Astrocyte of the cerebellum (primary cell): ENCODE measurements at regions of chr2 and their contacts with region 1.

Region 1: DNA sequence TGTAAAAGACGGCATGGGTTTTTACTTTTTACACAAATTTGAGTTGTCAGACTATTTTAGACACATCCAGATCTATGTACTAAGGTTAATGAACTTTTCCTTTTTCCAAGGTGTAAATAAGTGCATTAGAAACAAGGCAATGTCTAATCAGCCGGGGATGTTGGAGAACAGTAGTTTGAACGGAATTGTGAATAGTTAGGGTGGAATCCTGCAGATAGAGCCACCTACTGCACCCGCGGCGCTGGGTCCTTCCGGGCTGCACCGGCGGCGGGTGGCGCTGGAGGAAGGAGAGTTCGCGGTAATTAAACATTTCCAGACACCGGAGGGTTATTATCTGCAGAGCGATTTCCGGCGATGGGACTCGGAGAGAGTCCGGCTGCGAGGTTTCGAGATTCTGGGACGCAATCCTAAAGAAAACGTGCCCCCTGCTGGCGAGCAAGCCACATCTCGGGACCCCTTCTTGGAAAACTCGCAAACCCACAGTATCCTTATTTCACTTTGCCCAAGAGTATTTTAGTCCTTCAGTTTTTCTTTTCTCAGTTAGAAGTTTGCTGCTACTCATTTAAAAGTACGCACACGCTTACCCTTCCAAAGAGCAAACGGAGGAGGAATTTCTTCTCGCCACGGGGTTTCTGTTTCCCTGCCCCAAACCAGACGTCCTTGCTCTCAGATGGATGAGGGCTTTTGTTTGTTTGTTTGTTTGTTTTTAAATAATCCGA is 4.5 kb upstream of the OSR1 start:
- DNase-seq: peak; percentile 76
- H3K4me3 ChIP-seq: peak overlapping the region; percentile 58
- CTCF ChIP-seq: peak; percentile 74

Region 2: GRCh38 chr2:18520451-18521425 is 842.2 kb before region 1 on chr2:
- in situ Hi-C with region 1: loop called (anchors 5 kb)
- DNase-seq: peak; percentile 60
- H3K4me3 ChIP-seq: no peak overlapping the region
- CTCF ChIP-seq: peak; percentile 92

Region 3: GRCh38 chr2:18749912-18750526 is 612.9 kb before region 1 on chr2:
- in situ Hi-C with region 1: loop called (anchors 25 kb)
- DNase-seq: peak; percentile 64
- H3K4me3 ChIP-seq: no peak overlapping the region
- CTCF ChIP-seq: peak; percentile 70

Region 4: GRCh38 chr2:19403785-19404184 is 40.9 kb after region 1 on chr2:
- in situ Hi-C with region 1: no loop called
- DNase-seq: no peak
- H3K4me3 ChIP-seq: no peak overlapping the region
- CTCF ChIP-seq: no peak

Region 5: DNA sequence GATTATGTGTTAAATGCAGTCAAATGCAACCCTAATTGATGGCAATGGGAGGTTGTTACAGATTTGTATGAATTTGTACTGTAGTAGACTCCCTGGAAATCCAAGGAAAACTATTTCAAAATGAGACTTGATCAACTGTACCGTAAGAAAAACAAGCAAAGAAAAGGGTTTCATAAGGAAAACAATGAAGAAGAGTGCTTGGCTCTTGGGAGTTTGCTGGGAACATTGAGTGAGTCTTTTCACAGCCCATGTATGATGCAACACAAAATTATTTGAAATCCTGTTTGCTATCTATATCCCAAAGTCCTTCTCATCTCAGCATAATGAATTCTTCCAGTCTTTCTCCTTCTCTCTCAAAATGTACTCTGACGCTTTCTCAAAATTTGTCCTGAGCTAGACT is 62.5 kb after region 1 on chr2:
- in situ Hi-C with region 1: no loop called
- DNase-seq: no peak
- H3K4me3 ChIP-seq: no peak overlapping the region
- CTCF ChIP-seq: no peak

Region 6: GRCh38 chr2:19667085-19667484 is 304.2 kb after region 1 on chr2:
- in situ Hi-C with region 1: loop called (anchors 25 kb)
- DNase-seq: peak; percentile 39
- H3K4me3 ChIP-seq: no peak overlapping the region
- CTCF ChIP-seq: peak; percentile 40

Region 7: GRCh38 chr2:19863303-19864041 is 500.6 kb after region 1 on chr2:
- in situ Hi-C with region 1: loop called (anchors 25 kb)
- DNase-seq: no peak
- H3K4me3 ChIP-seq: no peak overlapping the region
- CTCF ChIP-seq: peak; percentile 81